ENCODE measurements at regions of chr7 and their contacts with region 1.

Region 1: DNA sequence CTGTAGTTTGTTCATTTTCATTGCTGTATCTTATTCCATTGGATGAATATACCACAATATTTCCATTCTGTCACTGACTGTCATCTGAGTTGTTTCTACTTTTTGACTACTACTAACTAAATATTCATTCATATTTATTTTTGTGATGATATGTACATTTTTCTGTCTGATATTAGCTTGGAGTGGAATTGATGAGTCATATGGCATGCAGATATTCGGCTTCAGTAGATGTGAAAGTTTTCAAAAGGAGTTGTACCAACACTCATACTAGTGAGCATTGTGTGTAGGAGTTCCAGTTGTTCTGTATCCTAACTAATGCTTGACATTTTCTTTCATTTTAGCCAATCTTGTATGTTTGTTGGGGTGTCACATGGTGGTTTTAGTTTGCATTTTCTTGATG is 7.7 kb downstream of the RUNDC3B start:
- DNase-seq: no peak
- ATAC-seq: no peak
- H3K4me3 Mint-ChIP-seq: no peak overlapping the region
- H3K27ac Mint-ChIP-seq: no peak overlapping the region
- H3K4me1 Mint-ChIP-seq: no peaks in the 10 kb centered on the region
- H3K27me3 Mint-ChIP-seq: no peaks in the 10 kb centered on the region

Region 2: DNA sequence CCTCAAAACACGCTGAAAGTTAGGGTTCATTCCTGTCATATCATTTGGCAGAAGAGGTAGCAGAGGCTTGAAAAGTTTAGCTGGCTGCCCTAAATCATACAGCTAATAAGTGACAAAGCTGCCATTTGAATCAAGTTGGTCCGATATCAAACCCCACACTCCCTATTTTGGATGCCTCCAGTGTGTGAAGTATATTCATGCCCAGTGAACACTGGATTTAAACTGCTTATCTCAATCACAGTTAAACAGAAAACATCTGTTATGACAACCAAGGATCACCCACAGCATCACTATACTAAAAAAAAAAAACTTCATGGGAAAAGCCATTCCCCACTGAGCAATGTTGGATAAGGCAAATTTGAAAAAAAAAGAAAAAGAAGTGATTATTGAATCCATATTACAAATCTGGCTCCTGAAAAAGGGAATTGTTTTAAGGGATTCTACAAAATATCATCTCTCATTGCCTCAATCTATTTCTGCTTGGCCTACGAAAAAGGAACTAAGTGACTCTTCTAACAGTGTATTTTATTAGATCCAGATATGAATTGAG is 83.5 kb before region 1 on chr7:
- CTCF ChIA-PET with region 1: no interaction called
- POLR2A ChIA-PET with region 1: no interaction called
- intact Hi-C with region 1: no loop called
- DNase-seq: no peak
- ATAC-seq: no peak
- H3K4me3 Mint-ChIP-seq: no peak overlapping the region
- H3K27ac Mint-ChIP-seq: no peak overlapping the region
- H3K4me1 Mint-ChIP-seq: no peaks in the 10 kb centered on the region
- H3K27me3 Mint-ChIP-seq: no peaks in the 10 kb centered on the region

Region 3: GRCh38 chr7:87615197-87615596 is 20.7 kb before region 1 on chr7:
- CTCF ChIA-PET with region 1: no interaction called
- POLR2A ChIA-PET with region 1: no interaction called
- intact Hi-C with region 1: loop called in 1 of 2 experiments (anchors 1 kb)
- DNase-seq: no peak
- ATAC-seq: no peak
- H3K4me3 Mint-ChIP-seq: no peak overlapping the region
- H3K27ac Mint-ChIP-seq: no peak overlapping the region
- H3K4me1 Mint-ChIP-seq: no peaks in the 10 kb centered on the region
- H3K27me3 Mint-ChIP-seq: peaks cover 9% of the 10 kb centered on the region

Region 4: DNA sequence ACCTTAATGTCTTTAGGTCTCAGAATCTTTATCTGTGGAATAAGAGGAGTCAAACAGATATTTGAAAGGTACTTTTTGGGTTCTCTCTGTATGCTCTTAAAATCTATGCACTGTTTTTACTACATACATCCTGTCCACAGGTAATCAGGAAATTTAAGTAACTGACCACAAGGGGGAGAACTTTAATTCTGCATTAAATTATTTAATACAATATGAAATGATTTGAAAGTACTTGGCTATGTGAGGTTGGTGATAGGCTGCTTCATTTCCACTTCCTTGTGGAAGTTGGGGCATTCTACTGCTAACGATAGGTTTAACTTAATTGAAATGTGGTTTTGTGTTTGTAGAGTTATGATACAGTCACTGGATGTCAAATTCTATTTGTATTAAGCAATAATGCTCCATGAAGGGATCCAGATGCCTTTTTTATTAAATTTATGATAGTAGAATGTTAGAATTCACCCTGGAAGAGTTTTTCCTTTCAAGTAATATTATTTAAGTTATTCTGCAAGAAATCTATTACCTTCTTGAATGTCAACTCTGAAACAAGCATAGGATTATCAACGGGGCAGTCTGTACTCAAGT is 1153.7 kb after region 1 on chr7:
- CTCF ChIA-PET with region 1: no interaction called
- POLR2A ChIA-PET with region 1: no interaction called
- intact Hi-C with region 1: no loop called
- DNase-seq: no peak
- ATAC-seq: no peak
- H3K4me3 Mint-ChIP-seq: no peak overlapping the region
- H3K27ac Mint-ChIP-seq: no peak overlapping the region
- H3K4me1 Mint-ChIP-seq: no peaks in the 10 kb centered on the region
- H3K27me3 Mint-ChIP-seq: no peaks in the 10 kb centered on the region

Measured in activated CD4-positive, alpha-beta T cell treated with anti-CD3 and anti-CD28 coated beads for 36 hours (primary cell).